Sciatic nerve (tissue), 2 donors: ENCODE measurements at regions of chr4 and their contacts with region 1.

Region 1: DNA sequence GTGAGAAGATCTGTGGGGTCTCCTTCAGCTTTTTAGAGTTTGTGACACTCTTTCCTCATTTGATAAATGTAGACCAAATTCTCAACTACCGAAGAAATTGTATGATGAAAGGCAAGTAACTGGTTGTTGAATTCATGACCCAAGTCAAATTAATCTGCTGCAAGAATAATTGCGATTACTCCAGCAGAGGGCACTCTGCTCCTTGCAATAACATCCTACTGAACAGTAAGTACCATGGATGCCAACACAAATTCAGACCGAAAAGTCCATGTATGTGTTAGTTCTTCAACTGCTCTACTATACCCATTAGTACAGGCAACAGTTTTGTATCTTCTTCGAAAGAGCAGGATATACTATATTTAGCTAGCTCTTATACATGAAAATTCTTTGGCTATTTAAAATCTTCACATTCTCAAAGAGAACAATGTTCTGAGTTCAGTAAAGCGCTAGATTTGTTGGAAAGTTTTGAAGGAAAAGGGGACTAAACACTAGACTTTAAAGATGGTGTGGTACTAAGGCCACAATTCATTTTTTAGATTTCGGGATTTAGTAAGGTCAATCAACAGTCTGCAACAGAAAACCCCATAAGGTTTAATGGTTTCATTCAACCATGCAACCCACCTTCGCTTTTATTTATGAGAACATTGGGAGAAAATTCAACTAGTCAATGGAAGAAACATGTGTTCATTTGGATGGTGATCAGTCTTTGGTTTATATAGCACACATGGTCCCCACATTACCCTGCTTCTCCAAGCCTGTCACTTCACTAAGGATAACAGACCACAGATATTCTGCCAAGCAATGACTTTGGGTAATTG is 105.4 kb upstream of the TBC1D9 start:
- DNase-seq: peak; percentile 73
- ATAC-seq: peak; percentile 89

Region 2: DNA sequence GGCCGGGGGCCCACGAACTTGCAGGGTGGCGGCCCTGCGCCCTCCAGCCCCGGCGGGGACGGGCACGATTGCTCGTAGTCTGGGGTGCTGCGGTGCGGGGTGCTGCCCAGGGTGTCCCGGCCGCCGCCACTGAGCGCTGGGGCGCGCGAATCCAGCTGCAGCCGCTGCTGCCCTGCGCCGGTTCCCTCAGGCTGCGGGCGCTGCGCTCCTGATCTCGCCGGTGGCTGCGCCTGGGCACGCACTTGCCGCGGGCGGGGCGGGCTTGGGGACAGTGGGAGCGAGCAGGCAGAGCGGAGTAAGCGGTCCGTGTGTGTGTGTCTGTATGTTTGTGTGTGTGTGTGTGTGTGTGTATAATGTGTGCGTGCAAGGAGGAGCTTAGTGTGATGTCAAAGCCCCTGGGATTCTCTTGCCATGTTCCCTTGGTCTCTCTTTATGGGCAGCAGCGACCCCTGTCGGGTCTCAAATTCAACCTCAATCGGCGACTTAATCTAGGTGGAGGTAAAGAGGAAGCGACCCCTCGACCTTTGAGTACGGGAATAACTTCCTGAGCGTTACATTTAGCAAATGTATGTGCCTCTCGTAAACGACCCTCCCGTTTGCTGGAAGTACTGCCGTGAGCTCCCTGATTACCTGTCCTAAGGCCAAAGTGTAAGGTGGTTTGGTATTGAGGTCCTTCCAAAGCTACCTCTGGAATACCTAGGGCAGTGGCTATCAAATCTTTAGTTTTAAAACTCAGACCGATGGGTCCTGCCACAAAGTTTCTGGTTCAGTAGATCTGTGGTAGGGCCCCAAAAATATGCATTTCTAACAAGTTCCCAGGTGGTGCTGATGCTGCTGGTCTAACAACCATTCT is 271.8 kb after region 1 on chr4 and contains the start of gene RNF150:
- intact Hi-C with region 1: loop called (anchors 2 kb)
- DNase-seq: peak; percentile 89
- ATAC-seq: peak; percentile 93
- total RNA-seq, gene RNF150: 13.2 TPM